Breast epithelium (tissue), 4 donors: ENCODE measurements at regions of chr12 and their contacts with region 1.

Region 1: GRCh38 chr12:116194935-116195431 is 82.5 kb downstream of the MED13L start:
- DNase-seq: no peak
- H3K4me3 ChIP-seq: no peak overlapping the region
- H3K27ac ChIP-seq: no peak overlapping the region
- H3K4me1 ChIP-seq: peaks cover 0 to 3% of the 10 kb centered on the region in 2 donors
- H3K27me3 ChIP-seq: no peaks in the 10 kb centered on the region
- CTCF ChIP-seq: no peak
- POLR2A ChIP-seq: no peak

Region 2: DNA sequence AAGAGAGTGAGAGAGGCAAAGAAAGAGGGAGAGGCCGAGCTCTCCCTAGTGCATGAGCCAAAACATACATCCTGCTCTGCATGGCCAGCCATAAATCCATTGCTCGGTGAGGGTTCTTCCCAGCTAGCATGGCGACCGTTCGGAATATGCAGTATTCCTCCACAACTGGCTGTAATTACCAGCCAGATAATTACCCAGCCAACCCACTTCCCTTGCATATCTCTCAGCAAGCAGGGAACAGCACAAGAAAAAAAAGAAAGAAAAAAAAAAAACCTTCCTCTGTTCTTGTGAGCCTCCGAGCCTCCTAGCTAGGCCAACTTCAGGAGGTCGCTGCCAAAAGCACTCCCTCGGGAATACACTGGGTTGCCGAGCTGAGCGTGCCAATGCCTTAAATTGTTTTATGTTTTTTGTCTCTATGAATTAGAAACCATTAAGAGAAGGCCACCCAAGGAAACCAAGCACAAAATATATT is 485.4 kb before region 1 on chr12:
- intact Hi-C with region 1: loop called (anchors 5 kb)
- DNase-seq: no peak
- H3K4me3 ChIP-seq: no peak overlapping the region
- H3K27ac ChIP-seq: no peak overlapping the region
- H3K4me1 ChIP-seq: peaks cover 0 to 5% of the 10 kb centered on the region in 2 donors
- H3K27me3 ChIP-seq: no peaks in the 10 kb centered on the region
- CTCF ChIP-seq: no peak
- POLR2A ChIP-seq: no peak

Region 3: DNA sequence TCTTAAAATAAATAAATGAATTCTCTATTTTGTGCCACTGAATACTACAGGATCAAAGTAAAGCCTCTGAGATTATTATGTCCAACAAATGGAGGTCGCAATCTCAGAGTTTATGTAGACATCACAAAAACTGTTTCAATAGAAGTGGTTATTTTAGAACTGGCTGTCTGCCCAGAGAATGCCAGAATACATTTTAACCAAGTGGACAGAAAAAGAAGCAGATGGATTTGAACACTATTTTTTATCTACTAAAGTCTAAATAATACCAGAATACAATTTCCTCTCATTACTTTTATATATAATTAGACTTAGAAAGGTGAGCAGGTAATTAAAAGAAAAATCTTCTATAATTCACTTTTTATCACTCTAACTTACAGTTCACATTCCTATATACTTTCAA is 35.8 kb before region 1 on chr12:
- intact Hi-C with region 1: no loop called
- DNase-seq: no peak
- H3K4me3 ChIP-seq: no peak overlapping the region
- H3K27ac ChIP-seq: no peak overlapping the region
- H3K4me1 ChIP-seq: no peaks in the 10 kb centered on the region
- H3K27me3 ChIP-seq: no peaks in the 10 kb centered on the region
- CTCF ChIP-seq: no peak
- POLR2A ChIP-seq: no peak